ENCODE measurements at regions of chr3 and their contacts with region 1.

Region 1: GRCh38 chr3:129663026-129663446 is 56.6 kb upstream of the PLXND1 start:
- DNase-seq: peak; percentile 74
- H3K4me3 Mint-ChIP-seq: peak overlapping the region; percentile 36
- H3K27ac Mint-ChIP-seq: peak overlapping the region; percentile 60
- H3K4me1 Mint-ChIP-seq: peaks cover 74% of the 10 kb centered on the region
- H3K27me3 Mint-ChIP-seq: no peaks in the 10 kb centered on the region
- CTCF ChIP-seq: no peak

Region 2: DNA sequence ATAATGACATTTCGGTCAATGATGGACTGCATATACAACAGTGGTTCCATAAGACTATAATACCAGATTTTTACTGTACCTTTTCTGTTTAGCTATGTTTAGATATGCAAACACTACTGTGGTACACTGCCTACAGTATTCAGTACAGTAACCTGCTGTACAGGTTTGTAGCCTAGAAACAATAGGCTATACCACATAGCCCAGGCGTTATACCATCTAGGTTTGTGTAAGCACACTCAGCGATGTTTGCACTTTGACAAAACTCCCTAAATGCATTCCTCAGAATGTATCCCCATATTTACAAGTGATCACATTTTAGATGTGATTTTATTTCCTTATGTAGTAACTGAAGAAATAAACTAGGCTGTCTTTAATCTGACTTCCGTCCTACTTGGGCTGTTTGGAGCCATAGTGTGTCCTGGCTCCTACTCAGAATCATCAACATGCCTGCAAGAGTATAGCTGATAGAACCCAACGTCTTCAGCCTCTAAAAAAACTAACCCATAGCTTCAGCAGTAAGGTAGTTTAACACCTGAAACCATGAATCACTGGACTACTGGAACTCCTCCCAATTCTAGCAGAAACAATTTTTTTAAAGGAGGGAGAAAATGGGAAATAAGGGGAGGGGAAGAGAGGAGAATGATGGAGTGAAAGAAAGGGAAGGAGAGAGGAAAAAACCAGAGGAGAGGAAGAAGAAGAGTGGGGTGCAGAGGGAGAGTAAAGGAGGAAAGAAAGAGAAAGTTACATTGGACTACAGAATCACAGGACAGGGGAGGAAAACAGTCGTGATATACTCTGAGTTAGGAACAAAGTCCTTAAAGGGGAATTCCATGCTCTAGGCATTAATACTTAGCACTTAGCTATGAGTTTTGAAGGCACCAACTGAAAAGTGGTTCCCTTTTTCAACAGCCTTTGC is 11.1 kb after region 1 on chr3:
- CTCF ChIA-PET with region 1: interaction called, 22 read pairs
- intact Hi-C with region 1: no loop called
- DNase-seq: no peak
- H3K4me3 Mint-ChIP-seq: peak overlapping the region; percentile 7
- H3K27ac Mint-ChIP-seq: peak overlapping the region; percentile 16
- H3K4me1 Mint-ChIP-seq: peaks cover 35% of the 10 kb centered on the region
- H3K27me3 Mint-ChIP-seq: no peaks in the 10 kb centered on the region
- CTCF ChIP-seq: no peak

Region 3: DNA sequence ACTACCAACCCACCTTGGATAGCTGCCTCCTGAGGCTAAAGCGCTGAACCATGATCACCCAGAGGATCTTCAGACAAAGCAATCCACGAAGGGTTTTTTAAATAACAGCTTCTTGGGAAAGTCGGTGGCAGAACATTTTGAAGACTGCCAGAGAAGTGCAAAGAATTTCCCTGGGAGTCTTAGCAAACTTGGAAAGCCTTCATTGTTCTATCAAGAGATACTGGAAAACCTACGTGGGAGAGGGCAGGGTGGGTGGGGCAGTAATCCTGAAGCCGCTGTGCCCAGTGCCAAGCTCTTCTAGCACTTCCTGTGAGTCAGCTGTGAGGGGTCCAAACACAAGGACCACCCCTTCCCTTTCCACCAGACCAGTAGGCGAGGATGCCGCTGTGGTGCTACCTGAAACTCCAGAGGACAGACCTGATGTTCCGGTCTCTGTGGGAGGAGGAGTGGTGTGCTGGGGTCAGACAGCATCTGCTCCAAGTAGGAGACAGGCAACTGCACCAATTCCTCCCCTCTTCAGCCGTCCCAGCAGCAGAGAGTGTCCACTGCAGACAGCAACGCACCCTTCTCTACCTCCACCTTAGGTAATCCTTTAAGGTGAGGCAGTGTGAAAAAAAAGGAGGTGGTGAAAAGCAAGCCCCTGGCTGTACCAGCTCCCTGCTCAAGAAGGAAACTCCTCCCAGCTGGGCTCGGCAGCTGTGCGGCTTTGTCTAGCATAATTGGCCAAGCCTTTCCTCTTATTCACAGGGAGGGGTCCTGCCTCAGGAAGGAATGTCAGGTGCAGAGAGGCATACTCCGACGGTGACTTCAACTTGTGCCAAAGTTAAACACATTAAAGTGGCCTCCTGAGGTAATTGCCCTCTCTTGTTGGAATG is 131.5 kb after region 1 on chr3:
- CTCF ChIA-PET with region 1: interaction called, 7 read pairs
- intact Hi-C with region 1: loop called (anchors 5 kb)
- DNase-seq: peak; percentile 95
- H3K4me3 Mint-ChIP-seq: peak overlapping the region; percentile 86
- H3K27ac Mint-ChIP-seq: peak overlapping the region; percentile 57
- H3K4me1 Mint-ChIP-seq: peaks cover 52% of the 10 kb centered on the region
- H3K27me3 Mint-ChIP-seq: no peaks in the 10 kb centered on the region
- CTCF ChIP-seq: no peak

Region 4: DNA sequence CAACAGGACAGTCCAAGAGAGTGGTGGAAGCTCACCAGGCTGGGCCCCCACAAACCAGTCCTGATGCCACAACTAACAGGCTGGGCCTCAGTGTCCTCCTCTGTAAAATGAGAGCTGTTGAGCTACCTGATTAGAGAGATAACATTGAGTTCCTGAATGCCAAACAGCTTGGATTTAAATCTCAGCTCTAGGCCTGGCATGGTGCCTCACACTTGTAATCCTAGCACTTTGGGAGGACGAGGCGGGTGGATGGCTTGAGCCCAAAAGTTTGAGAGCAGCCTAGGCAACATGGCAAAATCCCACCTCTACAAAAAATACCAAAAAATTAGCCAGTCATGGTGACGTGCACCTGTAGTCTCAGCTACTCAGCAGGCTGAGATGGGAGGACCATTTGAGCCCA is 250.6 kb after region 1 on chr3:
- CTCF ChIA-PET with region 1: interaction called, 10 read pairs
- intact Hi-C with region 1: no loop called
- DNase-seq: no peak
- H3K4me3 Mint-ChIP-seq: no peak overlapping the region
- H3K27ac Mint-ChIP-seq: no peak overlapping the region
- H3K4me1 Mint-ChIP-seq: peaks cover 10% of the 10 kb centered on the region
- H3K27me3 Mint-ChIP-seq: no peaks in the 10 kb centered on the region
- CTCF ChIP-seq: no peak

Measured in Calu3 (cell line).